Sigmoid colon (tissue), 7 donors: ENCODE measurements at regions of chr3 and their contacts with region 1.

Region 1: GRCh38 chr3:42101048-42101447 is 9.9 kb downstream of the TRAK1 start:
- DNase-seq: no peak
- H3K4me3 ChIP-seq: no peak overlapping the region
- H3K27ac ChIP-seq: peak overlapping the region; percentile 11 to 70 (median 40)
- H3K4me1 ChIP-seq: peaks cover 0 to 58% (median 47%) of the 10 kb centered on the region in 4 donors
- H3K27me3 ChIP-seq: no peaks in the 10 kb centered on the region
- CTCF ChIP-seq: no peak
- EP300 ChIP-seq: no peak
- POLR2A ChIP-seq: no peak

Region 2: DNA sequence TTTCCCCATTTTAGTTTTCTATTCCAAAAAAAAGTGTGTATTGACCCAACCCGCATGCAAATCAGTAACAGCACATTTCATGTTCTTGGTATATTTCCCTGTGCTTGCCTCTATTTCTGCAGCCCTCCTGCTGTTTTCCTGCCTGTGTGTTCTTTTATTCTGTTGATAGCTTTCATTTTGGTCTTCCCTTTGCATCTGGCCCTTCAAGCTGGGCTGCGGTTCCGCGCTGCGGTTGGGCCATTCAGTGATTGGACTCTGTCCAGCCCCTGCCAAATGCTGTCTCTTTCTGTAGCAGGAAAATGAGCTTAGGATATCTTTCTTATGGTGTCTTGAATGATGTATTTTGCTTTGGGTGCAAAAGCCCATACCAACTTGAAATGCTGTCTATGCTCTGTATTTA is 1526.4 kb before region 1 on chr3:
- intact Hi-C with region 1: loop called (anchors 10 kb)
- DNase-seq: no peak
- H3K4me3 ChIP-seq: no peak overlapping the region
- H3K27ac ChIP-seq: no peak overlapping the region
- H3K4me1 ChIP-seq: no peaks in the 10 kb centered on the region
- H3K27me3 ChIP-seq: no peaks in the 10 kb centered on the region
- CTCF ChIP-seq: no peak
- EP300 ChIP-seq: no peak
- POLR2A ChIP-seq: no peak

Region 3: DNA sequence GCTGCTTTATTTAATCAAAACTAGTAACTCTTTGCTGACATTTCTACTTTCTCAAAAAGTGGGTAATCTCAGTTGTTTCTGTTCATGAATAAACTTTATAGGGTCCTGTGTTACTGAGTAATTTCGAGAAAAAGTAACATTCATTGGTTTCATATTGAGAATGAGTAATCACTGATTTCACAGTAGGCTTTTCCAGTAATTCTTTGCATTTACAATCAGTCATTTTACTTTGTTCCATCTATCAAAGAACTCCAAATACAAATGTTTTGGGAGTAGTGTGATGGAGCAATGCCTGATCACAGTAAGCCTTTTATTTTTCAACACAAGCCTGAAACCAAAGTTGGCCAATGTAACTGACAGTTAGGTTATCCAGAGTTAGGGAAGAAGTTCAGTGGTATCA is 492.7 kb before region 1 on chr3:
- intact Hi-C with region 1: no loop called
- DNase-seq: no peak
- H3K4me3 ChIP-seq: no peak overlapping the region
- H3K27ac ChIP-seq: no peak overlapping the region
- H3K4me1 ChIP-seq: peaks cover 0 to 5% (median 2%) of the 10 kb centered on the region in 4 donors
- H3K27me3 ChIP-seq: no peaks in the 10 kb centered on the region
- CTCF ChIP-seq: no peak
- EP300 ChIP-seq: no peak
- POLR2A ChIP-seq: no peak

Region 4: GRCh38 chr3:41961750-41962679 is 139.0 kb before region 1 on chr3 and contains the start of gene ULK4:
- intact Hi-C with region 1: loop called (anchors 1 kb)
- DNase-seq: peak; percentile 99
- H3K4me3 ChIP-seq: peak within 1 kb of the TSS; percentile 79 to 97 (median 90)
- H3K27ac ChIP-seq: peak within 1 kb of the TSS; percentile 88 to 93 (median 90)
- H3K4me1 ChIP-seq: peaks cover 0 to 14% (median 10%) of the 10 kb centered on the region in 4 donors
- H3K27me3 ChIP-seq: no peaks in the 10 kb centered on the region
- CTCF ChIP-seq: no peak
- EP300 ChIP-seq: peak in 1 of 4 donors; percentile 32
- POLR2A ChIP-seq: peak in 1 of 2 donors; percentile 7
- total RNA-seq, gene ULK4: 8.9 to 18.6 (median 16.6) TPM

Region 5: GRCh38 chr3:42184651-42185443 is 83.8 kb after region 1 on chr3:
- intact Hi-C with region 1: loop called (anchors 5 kb)
- DNase-seq: peak; percentile 63
- H3K4me3 ChIP-seq: no peak overlapping the region
- H3K27ac ChIP-seq: no peak overlapping the region
- H3K4me1 ChIP-seq: peaks cover 0 to 6% (median 3%) of the 10 kb centered on the region in 4 donors
- H3K27me3 ChIP-seq: no peaks in the 10 kb centered on the region
- CTCF ChIP-seq: no peak
- EP300 ChIP-seq: no peak
- POLR2A ChIP-seq: no peak

Region 6: DNA sequence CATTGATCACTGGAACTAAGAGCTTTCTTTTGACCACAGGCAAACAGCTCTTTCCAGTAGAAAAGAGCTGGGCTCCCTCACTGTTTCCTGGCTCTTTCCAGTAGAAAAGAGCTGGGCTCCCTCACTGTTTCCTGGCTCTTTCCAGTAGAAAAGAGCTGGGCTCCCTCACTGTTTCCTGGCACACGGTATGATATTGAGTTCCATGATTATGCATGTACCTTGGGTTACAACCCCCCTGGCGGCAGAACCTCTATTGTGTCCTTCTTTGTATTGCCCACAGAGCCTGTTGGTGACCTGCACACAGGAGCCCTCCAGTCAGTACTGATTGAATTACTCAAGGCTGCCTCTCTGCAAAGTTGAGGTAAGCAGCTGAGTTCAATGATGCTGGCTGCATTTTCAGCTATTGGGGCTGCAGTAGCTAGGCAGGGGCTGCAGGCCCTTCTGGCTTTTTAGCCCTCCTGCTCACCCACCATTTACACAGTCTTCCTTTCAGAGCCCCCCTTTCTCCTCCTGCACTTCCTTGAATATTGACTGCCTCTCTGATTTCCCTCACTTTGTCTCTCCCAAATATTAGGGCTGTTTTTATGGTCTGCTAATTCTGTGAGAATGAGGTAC is 718.4 kb after region 1 on chr3:
- intact Hi-C with region 1: no loop called
- DNase-seq: no peak
- H3K4me3 ChIP-seq: no peak overlapping the region
- H3K27ac ChIP-seq: no peak overlapping the region
- H3K4me1 ChIP-seq: peaks cover 0 to 11% (median 0%) of the 10 kb centered on the region in 4 donors
- H3K27me3 ChIP-seq: no peaks in the 10 kb centered on the region
- CTCF ChIP-seq: no peak
- EP300 ChIP-seq: no peak
- POLR2A ChIP-seq: no peak